CD14-positive monocyte (primary cell): ENCODE measurements at regions of chr20 and their contacts with region 1.

Region 1: GRCh38 chr20:4592316-4593148 is 129.2 kb upstream of the PRND start:
- DNase-seq: peak in 2 of 3 donors; percentile 33 to 40
- H3K4me3 ChIP-seq: peak overlapping the region in 1 of 3 experiments; percentile 65
- H3K4me3 Mint-ChIP-seq: peak overlapping the region; percentile 62 to 86
- H3K27ac ChIP-seq: no peak overlapping the region
- H3K27ac Mint-ChIP-seq: peak overlapping the region in 1 of 7 donors; percentile 73
- H3K4me1 ChIP-seq: peaks cover 11 to 12% of the 10 kb centered on the region in 2 donors
- H3K4me1 Mint-ChIP-seq: peaks cover 11% of the 10 kb centered on the region
- H3K27me3 ChIP-seq: peaks cover 0 to 7% of the 10 kb centered on the region in 2 donors
- H3K27me3 Mint-ChIP-seq: peaks cover 14 to 30% (median 14%) of the 10 kb centered on the region in 3 donors
- CTCF ChIP-seq: peak; percentile 97

Region 2: DNA sequence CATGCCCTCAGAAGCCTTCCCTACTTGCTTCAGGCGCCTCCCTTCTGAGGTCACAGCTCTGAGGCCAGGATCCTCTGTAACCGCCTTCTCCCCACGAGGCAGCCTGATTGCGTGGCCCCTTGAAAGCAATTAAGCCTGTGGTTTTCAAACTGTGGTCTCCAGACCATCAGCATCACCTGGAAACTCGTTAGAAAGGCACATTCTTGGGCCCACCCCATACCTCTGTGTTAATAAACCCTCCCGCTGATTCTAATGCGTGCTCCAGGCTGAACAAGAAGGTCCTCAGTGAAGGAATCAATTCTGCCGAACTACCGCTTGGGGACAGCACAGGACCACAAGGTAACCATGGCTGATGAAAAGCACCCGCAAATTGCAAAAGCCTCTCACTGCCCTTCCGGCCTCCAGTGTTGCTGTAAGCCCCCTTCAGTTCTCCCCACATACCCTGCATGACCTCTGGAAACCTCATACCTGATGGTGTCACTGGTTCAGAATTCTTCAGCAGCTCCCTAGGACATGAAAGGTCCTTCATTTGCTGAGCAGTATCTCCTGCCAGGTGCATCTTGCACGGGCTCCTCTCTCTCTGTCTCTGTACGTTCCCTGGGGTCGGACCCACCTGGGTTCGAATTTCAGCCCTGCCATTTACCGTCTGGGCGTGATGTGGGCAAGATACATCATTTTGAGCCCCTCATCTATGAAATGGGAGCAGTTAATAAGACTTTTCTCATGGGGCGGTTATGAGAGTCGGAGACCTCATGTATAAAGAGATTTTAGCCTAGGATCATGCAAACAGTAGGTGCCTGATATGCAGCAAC is 483.8 kb before region 1 on chr20:
- intact Hi-C with region 1: loop called in 1 of 2 experiments (anchors 2 kb)
- DNase-seq: peak; percentile 59 to 80 (median 78)
- H3K4me3 ChIP-seq: no peak overlapping the region
- H3K4me3 Mint-ChIP-seq: no peak overlapping the region
- H3K27ac ChIP-seq: no peak overlapping the region
- H3K27ac Mint-ChIP-seq: no peak overlapping the region
- H3K4me1 ChIP-seq: peaks cover 14 to 16% of the 10 kb centered on the region in 2 donors
- H3K4me1 Mint-ChIP-seq: peaks cover 20% of the 10 kb centered on the region
- H3K27me3 ChIP-seq: peaks cover 0 to 6% of the 10 kb centered on the region in 2 donors
- H3K27me3 Mint-ChIP-seq: peaks cover 1 to 7% (median 4%) of the 10 kb centered on the region in 3 donors
- CTCF ChIP-seq: peak; percentile 93

Region 3: GRCh38 chr20:4252005-4252404 is 340.5 kb before region 1 on chr20:
- intact Hi-C with region 1: loop called in 1 of 2 experiments (anchors 5 kb)
- DNase-seq: no peak
- H3K4me3 ChIP-seq: no peak overlapping the region
- H3K4me3 Mint-ChIP-seq: no peak overlapping the region
- H3K27ac ChIP-seq: no peak overlapping the region
- H3K27ac Mint-ChIP-seq: no peak overlapping the region
- H3K4me1 ChIP-seq: peaks cover 6 to 11% of the 10 kb centered on the region in 2 donors
- H3K4me1 Mint-ChIP-seq: peaks cover 7% of the 10 kb centered on the region
- H3K27me3 ChIP-seq: peaks cover 15 to 40% of the 10 kb centered on the region in 2 donors
- H3K27me3 Mint-ChIP-seq: peaks cover 34 to 44% (median 44%) of the 10 kb centered on the region in 3 donors
- CTCF ChIP-seq: no peak

Region 4: GRCh38 chr20:5290596-5290995 is 698.1 kb after region 1 on chr20:
- intact Hi-C with region 1: no loop called
- DNase-seq: no peak
- H3K4me3 ChIP-seq: no peak overlapping the region
- H3K4me3 Mint-ChIP-seq: peak overlapping the region in 1 of 2 donors; percentile 41
- H3K27ac ChIP-seq: no peak overlapping the region
- H3K27ac Mint-ChIP-seq: no peak overlapping the region
- H3K4me1 ChIP-seq: no peaks in the 10 kb centered on the region
- H3K4me1 Mint-ChIP-seq: no peaks in the 10 kb centered on the region
- H3K27me3 ChIP-seq: peaks cover 2 to 8% of the 10 kb centered on the region in 2 donors
- H3K27me3 Mint-ChIP-seq: peaks cover 11 to 19% (median 17%) of the 10 kb centered on the region in 3 donors
- CTCF ChIP-seq: no peak